ENCODE measurements at regions of chr1 and their contacts with region 1.

Region 1: GRCh38 chr1:248825909-248826760 is at the start of gene SH3BP5L:
- DNase-seq: peak; percentile 95
- H3K4me3 Mint-ChIP-seq: peak within 1 kb of the TSS; percentile 90
- H3K27ac Mint-ChIP-seq: peak within 1 kb of the TSS; percentile 98
- H3K4me1 Mint-ChIP-seq: peaks cover 53% of the 10 kb centered on the region
- H3K27me3 Mint-ChIP-seq: no peaks in the 10 kb centered on the region
- total RNA-seq, gene SH3BP5L: 20.3 to 20.5 TPM

Region 2: DNA sequence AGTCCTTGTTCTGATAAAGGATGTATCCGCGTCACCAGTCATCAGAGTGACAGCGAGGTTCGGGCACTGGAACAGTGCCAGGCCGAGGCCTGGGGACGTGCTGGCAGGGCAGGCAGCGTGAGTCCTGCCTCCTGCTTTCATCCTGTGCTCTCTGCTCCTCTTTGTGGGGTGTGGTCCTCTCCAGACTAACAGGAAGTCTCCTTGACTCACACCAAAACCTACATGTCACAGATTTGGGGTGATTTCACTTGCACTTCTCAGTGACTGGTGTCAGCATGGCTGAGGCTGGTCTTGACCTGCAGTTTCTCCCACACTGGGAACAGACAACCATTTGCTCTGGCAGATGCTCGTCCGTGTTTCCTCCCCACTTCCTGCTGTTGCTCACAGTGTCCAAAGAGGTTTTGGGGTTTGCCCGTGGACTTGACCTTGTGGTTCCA is 1418.9 kb before region 1 on chr1:
- CTCF ChIA-PET with region 1: no interaction called
- intact Hi-C with region 1: loop called (anchors 2 kb)
- DNase-seq: peak; percentile 73
- H3K4me3 Mint-ChIP-seq: no peak overlapping the region
- H3K27ac Mint-ChIP-seq: no peak overlapping the region
- H3K4me1 Mint-ChIP-seq: peaks cover 42% of the 10 kb centered on the region
- H3K27me3 Mint-ChIP-seq: peaks cover 3% of the 10 kb centered on the region

Region 3: DNA sequence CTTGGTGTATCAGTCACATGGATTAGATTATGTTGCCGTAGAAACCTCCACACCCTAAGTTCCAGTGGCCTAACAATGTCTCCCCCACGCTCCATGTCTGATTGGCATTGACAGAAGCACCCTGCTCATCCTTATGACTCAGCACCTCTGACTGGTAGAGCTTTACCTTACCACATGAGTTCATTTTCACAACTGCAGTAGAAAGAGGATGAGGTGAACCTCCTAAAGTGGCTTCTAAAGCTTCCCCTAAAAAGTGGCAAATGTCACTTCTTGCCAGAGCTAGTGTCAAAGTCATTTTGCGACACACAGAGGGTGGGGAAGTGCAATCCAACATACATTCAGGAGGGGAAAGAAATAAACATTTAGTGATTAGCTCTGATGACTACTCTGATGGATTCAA is 40.0 kb before region 1 on chr1:
- CTCF ChIA-PET with region 1: no interaction called
- intact Hi-C with region 1: loop called (anchors 2 kb)
- DNase-seq: no peak
- H3K4me3 Mint-ChIP-seq: no peak overlapping the region
- H3K27ac Mint-ChIP-seq: no peak overlapping the region
- H3K4me1 Mint-ChIP-seq: no peaks in the 10 kb centered on the region
- H3K27me3 Mint-ChIP-seq: peaks cover 8% of the 10 kb centered on the region

Region 4: DNA sequence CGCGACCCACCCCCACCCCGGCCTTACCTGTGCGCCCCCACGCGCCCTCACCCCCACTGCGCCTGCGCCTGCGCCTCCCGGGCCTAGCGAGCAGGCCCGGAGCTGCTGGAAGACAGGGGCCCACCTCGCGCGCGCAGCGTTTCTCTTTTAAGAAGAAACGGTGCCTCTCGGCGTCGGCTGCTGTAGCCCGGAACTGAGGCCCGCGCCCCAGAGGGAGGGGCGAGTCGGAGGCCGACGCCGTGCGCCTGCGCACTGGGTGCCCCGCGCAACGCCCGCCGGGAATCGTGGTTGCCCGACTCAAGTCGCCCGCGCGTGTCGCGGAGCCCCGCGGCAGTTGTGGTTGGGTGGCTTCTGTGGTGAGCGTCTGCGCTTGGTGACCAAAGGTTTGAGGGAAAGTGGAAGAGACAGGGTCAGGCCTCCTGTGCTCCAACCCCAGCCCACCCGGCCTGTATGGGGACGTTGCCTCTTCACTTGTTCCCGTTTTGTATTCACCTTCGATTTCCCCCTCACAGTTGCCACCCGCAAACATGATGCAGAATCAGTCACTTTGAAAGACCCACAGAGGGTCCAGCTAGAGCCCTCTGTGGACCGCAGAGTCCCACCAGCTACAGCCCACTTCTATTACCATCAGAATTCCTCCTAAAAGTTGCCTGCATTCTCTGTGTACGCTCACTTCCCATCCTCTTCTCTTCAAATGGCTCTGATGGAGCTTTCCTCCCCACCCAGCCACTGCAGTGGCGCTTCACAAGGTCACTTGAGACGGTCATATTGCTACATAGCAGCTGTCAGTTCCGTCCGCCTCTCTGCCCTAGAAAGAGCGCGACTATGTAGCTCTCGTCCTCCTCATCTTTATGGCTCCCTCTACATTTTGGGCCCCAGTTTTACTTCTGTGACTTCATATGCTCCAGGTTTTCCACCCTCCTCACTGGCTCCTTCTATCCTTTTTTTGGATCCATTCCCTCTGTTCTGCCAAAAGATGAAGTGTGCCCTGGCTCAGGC is 33.1 kb after region 1 on chr1 and contains the start of gene ZNF692:
- CTCF ChIA-PET with region 1: interaction called, 5 read pairs
- intact Hi-C with region 1: loop called (anchors 1 kb)
- DNase-seq: peak; percentile 97
- H3K4me3 Mint-ChIP-seq: peak within 1 kb of the TSS; percentile 94
- H3K27ac Mint-ChIP-seq: peak within 1 kb of the TSS; percentile 93
- H3K4me1 Mint-ChIP-seq: peaks cover 65% of the 10 kb centered on the region
- H3K27me3 Mint-ChIP-seq: no peaks in the 10 kb centered on the region
- total RNA-seq, gene ZNF692: 87.6 to 88.7 TPM

Region 5: DNA sequence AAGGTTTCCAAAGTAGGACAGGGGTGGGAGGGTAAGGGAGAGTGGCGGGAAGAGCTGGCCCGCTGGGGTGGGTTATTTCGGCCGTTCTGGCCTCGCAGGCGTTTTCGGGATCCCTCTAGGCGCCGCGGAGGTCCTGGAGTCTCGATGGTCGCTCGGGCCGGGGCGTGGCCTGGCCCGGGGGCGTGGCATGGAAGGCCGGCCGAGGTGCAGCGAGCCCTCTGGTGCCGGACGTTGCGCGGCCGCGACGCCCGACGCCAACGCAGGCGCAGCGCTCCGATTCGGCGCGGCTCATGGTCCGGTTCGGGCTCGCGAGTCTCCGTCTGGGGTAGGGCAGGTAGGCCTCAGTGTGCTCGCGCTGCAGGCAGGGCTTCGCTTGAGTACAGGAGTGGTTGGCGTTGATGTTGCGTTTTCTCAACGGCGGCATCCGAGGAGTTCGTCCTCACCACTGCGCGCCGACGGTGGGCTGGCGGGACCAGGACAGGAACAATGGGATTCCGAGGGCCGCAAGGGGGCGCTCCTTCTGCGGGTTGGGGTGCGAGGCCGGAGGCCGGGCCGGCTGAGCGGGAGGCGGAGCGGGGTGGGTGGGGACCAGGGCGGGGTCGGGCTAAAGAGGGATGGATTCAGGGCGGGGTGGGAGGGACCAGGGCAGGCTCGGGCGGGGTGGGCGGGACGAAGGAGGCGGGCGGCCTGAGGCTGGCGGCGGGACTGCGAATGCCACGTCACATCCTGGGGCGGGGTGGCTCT is 80.0 kb after region 1 on chr1 and contains the start of gene PGBD2:
- CTCF ChIA-PET with region 1: interaction called, 3 read pairs
- intact Hi-C with region 1: loop called (anchors 1 kb)
- DNase-seq: peak; percentile 97
- H3K4me3 Mint-ChIP-seq: peak within 1 kb of the TSS; percentile 92
- H3K27ac Mint-ChIP-seq: peak within 1 kb of the TSS; percentile 97
- H3K4me1 Mint-ChIP-seq: peaks cover 14% of the 10 kb centered on the region
- H3K27me3 Mint-ChIP-seq: no peaks in the 10 kb centered on the region
- total RNA-seq, gene PGBD2: 3.0 to 3.5 TPM

Measured in activated naive CD4-positive, alpha-beta T cell treated with anti-CD3 and anti-CD28 coated beads for 36 hours (primary cell).